ENCODE measurements at regions of chr1 and their contacts with region 1.

Region 1: GRCh38 chr1:30801771-30802198 is 44.2 kb upstream of the LAPTM5 start:
- DNase-seq: no peak
- H3K4me3 ChIP-seq: peak overlapping the region; percentile 15; the same call in 1 of the 2 replicates
- CTCF ChIP-seq: peak; percentile 95

Region 2: DNA sequence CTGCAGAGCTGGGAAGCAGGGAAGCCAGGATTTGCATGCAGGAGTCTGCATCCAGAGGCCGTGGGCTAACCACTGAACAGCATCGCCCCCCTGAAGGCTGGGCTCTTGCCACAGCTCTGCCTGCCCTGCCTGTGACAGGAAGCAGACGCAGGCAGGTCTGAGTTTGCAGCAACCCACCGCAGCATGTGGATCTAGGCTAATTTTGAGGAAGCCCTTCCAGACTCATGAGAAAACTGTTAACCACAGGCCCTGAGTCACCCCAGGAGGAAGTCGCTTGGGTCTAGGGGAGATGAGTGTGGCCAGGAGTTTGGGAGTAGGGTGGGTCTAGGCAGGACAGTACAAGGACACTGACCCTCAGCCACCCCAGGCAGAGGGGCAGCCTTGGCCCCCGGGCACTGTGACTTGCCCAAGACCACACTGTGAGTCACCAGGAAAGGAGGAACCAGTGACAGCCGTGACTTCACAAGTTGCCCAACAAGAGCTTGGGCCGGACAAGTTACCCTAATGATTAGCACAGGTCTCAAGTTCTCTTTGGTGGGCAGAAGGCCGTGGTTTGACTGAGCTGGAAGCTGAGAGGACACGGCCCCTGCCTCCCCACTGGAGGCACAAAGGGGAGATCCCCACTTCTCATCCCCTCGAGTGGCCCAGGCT is 45.1 kb before region 1 on chr1:
- CTCF ChIA-PET with region 1: interaction called, 12 read pairs
- POLR2A ChIA-PET with region 1: no interaction called
- DNase-seq: peak; percentile 50
- H3K4me3 ChIP-seq: no peak overlapping the region
- CTCF ChIP-seq: no peak

Region 3: DNA sequence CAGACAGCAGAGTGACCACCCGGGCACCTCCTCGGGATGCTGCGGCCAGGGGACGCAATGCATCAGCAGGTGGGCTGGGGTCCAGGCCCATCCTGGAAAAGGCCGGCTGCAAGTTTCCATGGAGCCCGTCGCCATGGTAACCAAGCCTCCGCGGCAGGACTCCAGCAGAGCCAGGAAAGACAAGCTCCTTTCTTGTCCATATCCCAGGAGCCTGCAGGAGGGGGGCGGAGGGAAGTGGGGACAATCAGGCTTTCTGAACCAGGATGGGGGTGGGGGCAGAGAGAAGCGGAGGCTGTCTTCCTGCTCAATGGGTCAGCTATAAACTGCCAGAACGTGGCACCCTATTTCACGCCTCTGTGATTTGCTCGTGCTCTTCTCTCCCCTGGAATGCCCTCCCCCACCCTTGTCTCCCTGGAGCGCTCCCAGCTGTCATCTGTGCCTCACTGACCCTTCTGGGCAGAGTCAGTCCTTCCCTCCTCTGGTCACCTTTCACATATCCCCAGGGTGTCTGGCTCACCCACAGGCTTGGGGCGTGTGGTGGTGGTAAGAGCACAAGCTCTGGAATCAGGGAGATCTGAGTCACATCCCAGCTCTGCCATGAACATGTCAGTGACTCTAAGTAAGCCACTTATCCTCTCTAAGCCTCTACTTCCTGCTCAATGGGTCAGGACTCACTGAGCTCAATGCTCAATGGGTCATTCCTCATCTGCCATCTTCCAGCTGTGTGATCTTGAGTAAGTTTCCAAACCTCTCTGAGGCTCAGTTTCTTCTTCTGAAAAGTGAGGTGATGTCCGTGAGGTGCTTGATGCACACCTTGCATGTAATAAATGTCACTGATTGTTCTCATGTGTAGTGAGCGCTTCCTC is 14.7 kb after region 1 on chr1:
- CTCF ChIA-PET with region 1: interaction called, 57 read pairs
- POLR2A ChIA-PET with region 1: no interaction called
- DNase-seq: peak; percentile 55
- H3K4me3 ChIP-seq: no peak overlapping the region
- CTCF ChIP-seq: no peak

Region 4: DNA sequence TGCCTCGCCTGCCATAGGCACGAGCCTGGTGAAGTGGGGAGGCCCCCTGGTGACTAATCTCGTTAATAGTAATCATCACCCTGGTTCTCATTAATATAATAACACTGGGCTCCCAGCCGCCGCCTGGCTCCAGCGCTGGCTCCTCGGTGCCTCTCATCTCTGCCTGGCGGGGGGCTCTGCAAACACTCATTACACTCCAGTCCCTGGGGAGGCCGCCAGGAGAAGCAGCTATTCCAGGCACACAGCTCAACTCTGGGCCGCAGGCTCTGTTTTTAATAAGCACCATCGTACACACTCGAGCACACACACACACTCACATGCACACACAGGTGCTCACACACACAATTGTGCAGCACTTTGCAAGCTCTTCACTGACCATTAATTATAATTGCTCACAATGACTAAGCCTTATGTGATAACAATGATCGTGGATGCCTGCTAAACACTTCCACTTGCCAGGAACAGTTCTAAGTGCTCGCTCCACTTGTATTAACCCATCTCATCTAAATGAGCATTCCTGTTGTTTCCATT is 54.5 kb after region 1 on chr1:
- CTCF ChIA-PET with region 1: interaction called, 23 read pairs
- POLR2A ChIA-PET with region 1: no interaction called
- DNase-seq: no peak
- H3K4me3 ChIP-seq: no peak overlapping the region
- CTCF ChIP-seq: no peak

Region 5: GRCh38 chr1:30888391-30888790 is 86.6 kb after region 1 on chr1:
- CTCF ChIA-PET with region 1: interaction called, 230 read pairs
- POLR2A ChIA-PET with region 1: no interaction called
- DNase-seq: peak; percentile 98
- H3K4me3 ChIP-seq: no peak overlapping the region; the same call in 1 of the 2 replicates
- CTCF ChIP-seq: no peak

Region 6: GRCh38 chr1:30929135-30929889 is 127.5 kb after region 1 on chr1:
- CTCF ChIA-PET with region 1: interaction called, 405 read pairs
- POLR2A ChIA-PET with region 1: no interaction called
- DNase-seq: no peak
- H3K4me3 ChIP-seq: no peak overlapping the region
- CTCF ChIP-seq: peak; percentile 61

Region 7: GRCh38 chr1:32801096-32801715 is 1999.4 kb after region 1 on chr1:
- CTCF ChIA-PET with region 1: no interaction called
- POLR2A ChIA-PET with region 1: no interaction called
- DNase-seq: peak; percentile 37
- H3K4me3 ChIP-seq: no peak overlapping the region
- CTCF ChIP-seq: no peak